Common myeloid progenitor, CD34-positive (primary cell): ENCODE measurements at regions of chr1 and their contacts with region 1.

Region 1: GRCh38 chr1:62299426-62300200 is 19.6 kb downstream of the KANK4 start:
- DNase-seq: no peak
- H3K4me3 ChIP-seq: no peak overlapping the region
- H3K27ac ChIP-seq: no peak overlapping the region
- H3K4me1 ChIP-seq: peaks cover 2 to 15% (median 11%) of the 10 kb centered on the region in 4 experiments
- H3K27me3 ChIP-seq: no peaks in the 10 kb centered on the region

Region 2: DNA sequence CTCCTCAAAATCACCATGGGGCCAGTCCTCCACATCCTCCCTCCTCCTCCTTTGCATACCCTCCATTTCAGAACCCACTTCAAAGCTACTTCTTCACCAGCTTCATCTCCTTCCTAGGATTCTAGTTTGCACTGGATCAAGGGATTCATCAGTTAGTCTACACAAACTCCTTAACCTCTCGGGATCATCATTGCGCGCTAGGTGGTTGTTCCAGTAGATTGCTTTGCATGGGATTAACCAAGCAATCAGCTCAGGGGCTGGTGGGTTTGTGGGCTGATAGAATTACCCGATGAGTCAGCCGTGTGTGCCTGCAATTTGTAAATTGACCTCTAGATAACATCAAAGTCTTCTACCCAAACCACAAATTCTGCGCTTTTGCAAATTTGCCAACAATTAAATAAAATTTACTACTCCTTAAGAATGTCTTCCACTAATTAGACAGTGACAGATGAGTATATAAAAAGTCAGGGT is 11.9 kb after region 1 on chr1:
- CTCF ChIA-PET with region 1: interaction called, 14 read pairs
- POLR2A ChIA-PET with region 1: no interaction called
- DNase-seq: peak in 2 of 3 donors; percentile 54 to 56
- H3K4me3 ChIP-seq: no peak overlapping the region
- H3K27ac ChIP-seq: no peak overlapping the region
- H3K4me1 ChIP-seq: peaks cover 0 to 3% (median 0%) of the 10 kb centered on the region in 4 experiments
- H3K27me3 ChIP-seq: peaks cover 0 to 2% (median 0%) of the 10 kb centered on the region in 5 experiments